ENCODE measurements at regions of chr3 and their contacts with region 1.

Region 1: DNA sequence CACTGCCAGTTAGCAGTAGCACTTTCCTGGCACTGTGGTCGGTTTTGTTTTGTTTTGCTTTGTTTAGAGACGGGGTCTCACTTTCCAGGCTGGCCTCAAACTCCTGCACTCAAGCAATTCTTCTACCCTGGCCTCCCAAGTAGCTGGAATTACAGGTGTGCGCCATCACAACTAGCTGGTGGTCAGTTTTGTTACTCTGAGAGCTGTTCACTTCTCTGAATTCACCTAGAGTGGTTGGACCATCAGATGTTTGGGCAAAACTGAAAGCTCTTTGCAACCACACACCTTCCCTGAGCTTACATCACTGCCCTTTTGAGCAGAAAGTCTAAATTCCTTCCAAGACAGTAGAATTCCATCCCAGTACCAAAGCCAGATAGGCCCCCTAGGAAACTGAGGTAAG is 22.6 kb downstream of the CLDN18 start:
- DNase-seq: peak; percentile 42
- ATAC-seq: peak; percentile 60
- H3K4me3 ChIP-seq: no peak overlapping the region
- H3K27ac ChIP-seq: peak overlapping the region; percentile 49
- H3K4me1 ChIP-seq: peaks cover 48% of the 10 kb centered on the region
- H3K27me3 ChIP-seq: no peaks in the 10 kb centered on the region
- CTCF ChIP-seq: no peak
- EP300 ChIP-seq: no peak; a peak in 1 of 4 replicates
- POLR2A ChIP-seq: no peak
- RAD21 ChIP-seq: no peak

Region 2: GRCh38 chr3:137325170-137325569 is 707.4 kb before region 1 on chr3:
- CTCF ChIA-PET with region 1: no interaction called
- POLR2A ChIA-PET with region 1: no interaction called
- RAD21 ChIA-PET with region 1: no interaction called
- SMC1A ChIA-PET with region 1: interaction called, 3 read pairs
- in situ Hi-C with region 1: no loop called
- intact Hi-C with region 1: loop called (anchors 10 kb)
- DNase-seq: peak; percentile 31
- ATAC-seq: peak; percentile 84
- H3K4me3 ChIP-seq: peak overlapping the region; percentile 3; the same call in 1 of the 2 replicates
- H3K27ac ChIP-seq: peak overlapping the region; percentile 18; the same call in 1 of the 2 replicates
- H3K4me1 ChIP-seq: peaks cover 9% of the 10 kb centered on the region; the same call in 1 of the 2 replicates
- H3K27me3 ChIP-seq: no peaks in the 10 kb centered on the region
- CTCF ChIP-seq: no peak
- EP300 ChIP-seq: peak in 1 of 2 experiments; percentile 36; a peak in 2 of 4 replicates
- POLR2A ChIP-seq: no peak
- RAD21 ChIP-seq: no peak

Region 3: DNA sequence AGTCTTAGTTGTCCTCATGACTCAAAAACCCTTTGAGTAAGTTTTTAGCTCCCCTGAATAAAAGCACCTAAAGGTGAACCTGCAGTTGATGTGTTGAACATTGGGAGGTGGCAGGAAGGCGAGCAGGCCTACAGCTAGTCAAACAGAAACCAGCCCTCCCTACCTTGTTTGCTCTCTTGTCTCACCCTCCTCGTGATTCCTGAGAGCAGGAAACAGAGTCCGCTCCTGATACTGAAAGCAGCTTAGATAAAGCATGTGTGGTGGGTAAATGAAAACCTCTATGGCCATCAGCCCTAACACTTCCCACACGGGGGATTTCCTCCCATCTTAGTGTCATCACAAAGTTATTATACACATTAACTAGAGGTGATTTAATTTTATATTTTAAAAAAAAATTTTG is 44.4 kb before region 1 on chr3:
- CTCF ChIA-PET with region 1: interaction called, 12 read pairs
- POLR2A ChIA-PET with region 1: interaction called, 25 read pairs
- RAD21 ChIA-PET with region 1: interaction called, 171 read pairs
- SMC1A ChIA-PET with region 1: interaction called, 114 read pairs
- in situ Hi-C with region 1: no loop called
- intact Hi-C with region 1: loop called (anchors 1 kb)
- DNase-seq: peak; percentile 89
- ATAC-seq: peak; percentile 82
- H3K4me3 ChIP-seq: no peak overlapping the region
- H3K27ac ChIP-seq: peak overlapping the region; percentile 79
- H3K4me1 ChIP-seq: peaks cover 11% of the 10 kb centered on the region
- H3K27me3 ChIP-seq: no peaks in the 10 kb centered on the region
- CTCF ChIP-seq: no peak
- EP300 ChIP-seq: peak; percentile 78 to 90
- POLR2A ChIP-seq: no peak
- RAD21 ChIP-seq: no peak; the same call in 1 of the 2 replicates

Region 4: GRCh38 chr3:138009476-138010272 is 22.9 kb before region 1 on chr3 and contains the start of gene CLDN18:
- CTCF ChIA-PET with region 1: interaction called, 3 read pairs
- POLR2A ChIA-PET with region 1: interaction called, 3 read pairs
- RAD21 ChIA-PET with region 1: interaction called, 5 read pairs
- SMC1A ChIA-PET with region 1: interaction called, 12 read pairs
- in situ Hi-C with region 1: no loop called
- intact Hi-C with region 1: no loop called
- DNase-seq: no peak
- ATAC-seq: no peak
- H3K4me3 ChIP-seq: no peak within 1 kb of the TSS
- H3K27ac ChIP-seq: no peak within 1 kb of the TSS
- H3K4me1 ChIP-seq: no peaks in the 10 kb centered on the region
- H3K27me3 ChIP-seq: no peaks in the 10 kb centered on the region
- CTCF ChIP-seq: no peak
- EP300 ChIP-seq: no peak
- POLR2A ChIP-seq: no peak
- RAD21 ChIP-seq: no peak
- polyA plus RNA-seq, gene CLDN18: 0.05 to 0.09 TPM

Region 5: DNA sequence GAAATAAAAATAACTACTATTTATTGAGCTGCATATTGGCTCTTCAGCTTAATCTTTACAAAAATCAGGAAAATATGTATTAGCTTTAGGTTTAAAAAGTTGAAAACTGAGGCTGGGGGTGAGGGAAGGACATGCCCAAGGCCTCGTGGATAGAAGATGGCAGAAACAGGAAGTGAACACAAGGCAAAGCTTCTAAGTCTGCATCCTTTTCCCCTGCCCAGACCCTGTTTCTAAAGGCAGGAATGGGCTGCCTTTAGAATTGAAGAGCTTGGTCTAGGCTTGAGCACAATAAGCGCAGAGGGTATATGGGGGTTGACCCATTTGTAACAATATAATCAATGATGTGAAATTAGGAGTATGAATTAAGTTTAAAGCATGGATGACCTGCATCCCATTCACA is 16.5 kb before region 1 on chr3:
- CTCF ChIA-PET with region 1: interaction called, 5 read pairs
- POLR2A ChIA-PET with region 1: interaction called, 21 read pairs
- RAD21 ChIA-PET with region 1: interaction called, 6 read pairs
- SMC1A ChIA-PET with region 1: interaction called, 24 read pairs
- in situ Hi-C with region 1: no loop called
- intact Hi-C with region 1: no loop called
- DNase-seq: no peak
- ATAC-seq: no peak
- H3K4me3 ChIP-seq: no peak overlapping the region
- H3K27ac ChIP-seq: no peak overlapping the region
- H3K4me1 ChIP-seq: no peaks in the 10 kb centered on the region
- H3K27me3 ChIP-seq: no peaks in the 10 kb centered on the region
- CTCF ChIP-seq: no peak
- EP300 ChIP-seq: no peak
- POLR2A ChIP-seq: no peak
- RAD21 ChIP-seq: no peak

Region 6: DNA sequence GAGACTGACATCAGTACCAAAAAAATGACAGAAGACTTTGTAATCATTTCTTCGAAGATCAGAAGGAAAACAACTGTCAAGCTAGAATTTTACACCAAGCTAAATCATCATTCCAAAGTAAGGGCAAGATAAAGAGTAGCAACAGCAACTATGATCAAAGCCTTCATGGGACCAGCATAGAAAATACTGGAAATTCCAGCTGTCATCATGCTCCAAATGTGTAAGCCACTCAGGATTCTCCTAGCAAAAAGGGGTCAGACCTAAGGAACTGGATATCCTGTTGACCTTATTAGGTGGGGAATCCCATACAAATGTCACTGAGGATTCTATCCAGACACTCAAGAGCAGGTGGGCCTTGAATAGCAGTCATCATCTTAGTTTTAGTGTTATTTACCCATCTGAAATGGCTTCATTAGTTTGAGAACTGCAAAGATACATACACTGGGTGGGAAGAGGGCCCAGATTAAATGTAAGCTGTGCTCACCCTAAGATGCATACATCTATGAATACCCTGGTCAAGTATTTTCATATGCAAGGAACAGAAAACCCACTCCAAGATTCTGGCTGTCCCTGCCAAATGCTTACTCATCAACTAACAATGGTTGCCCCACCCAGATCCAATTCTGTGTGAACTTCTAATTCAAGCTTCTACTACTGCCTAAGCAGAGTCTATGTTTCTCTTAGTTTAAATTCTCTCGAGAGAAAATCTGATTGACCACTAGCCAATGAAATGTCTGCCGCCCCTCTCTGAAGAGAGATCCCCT is 10.9 kb after region 1 on chr3:
- CTCF ChIA-PET with region 1: interaction called, 25 read pairs
- POLR2A ChIA-PET with region 1: interaction called, 8 read pairs
- RAD21 ChIA-PET with region 1: interaction called, 32 read pairs
- SMC1A ChIA-PET with region 1: interaction called, 76 read pairs
- in situ Hi-C with region 1: no loop called
- intact Hi-C with region 1: no loop called
- DNase-seq: no peak
- ATAC-seq: no peak
- H3K4me3 ChIP-seq: no peak overlapping the region
- H3K27ac ChIP-seq: no peak overlapping the region
- H3K4me1 ChIP-seq: peaks cover 29% of the 10 kb centered on the region
- H3K27me3 ChIP-seq: no peaks in the 10 kb centered on the region
- CTCF ChIP-seq: no peak
- EP300 ChIP-seq: no peak
- POLR2A ChIP-seq: no peak
- RAD21 ChIP-seq: no peak

Measured in GM12878 (cell line).